HEK293 (cell line): ENCODE measurements at regions of chr14 and their contacts with region 1.

Region 1: GRCh38 chr14:94036313-94037050 is 10.3 kb downstream of the OTUB2 start:
- H3K4me3 ChIP-seq: no peak overlapping the region
- H3K27ac ChIP-seq: no peak overlapping the region
- H3K4me1 ChIP-seq: no peaks in the 10 kb centered on the region
- CTCF ChIP-seq: peak; percentile 69

Region 2: DNA sequence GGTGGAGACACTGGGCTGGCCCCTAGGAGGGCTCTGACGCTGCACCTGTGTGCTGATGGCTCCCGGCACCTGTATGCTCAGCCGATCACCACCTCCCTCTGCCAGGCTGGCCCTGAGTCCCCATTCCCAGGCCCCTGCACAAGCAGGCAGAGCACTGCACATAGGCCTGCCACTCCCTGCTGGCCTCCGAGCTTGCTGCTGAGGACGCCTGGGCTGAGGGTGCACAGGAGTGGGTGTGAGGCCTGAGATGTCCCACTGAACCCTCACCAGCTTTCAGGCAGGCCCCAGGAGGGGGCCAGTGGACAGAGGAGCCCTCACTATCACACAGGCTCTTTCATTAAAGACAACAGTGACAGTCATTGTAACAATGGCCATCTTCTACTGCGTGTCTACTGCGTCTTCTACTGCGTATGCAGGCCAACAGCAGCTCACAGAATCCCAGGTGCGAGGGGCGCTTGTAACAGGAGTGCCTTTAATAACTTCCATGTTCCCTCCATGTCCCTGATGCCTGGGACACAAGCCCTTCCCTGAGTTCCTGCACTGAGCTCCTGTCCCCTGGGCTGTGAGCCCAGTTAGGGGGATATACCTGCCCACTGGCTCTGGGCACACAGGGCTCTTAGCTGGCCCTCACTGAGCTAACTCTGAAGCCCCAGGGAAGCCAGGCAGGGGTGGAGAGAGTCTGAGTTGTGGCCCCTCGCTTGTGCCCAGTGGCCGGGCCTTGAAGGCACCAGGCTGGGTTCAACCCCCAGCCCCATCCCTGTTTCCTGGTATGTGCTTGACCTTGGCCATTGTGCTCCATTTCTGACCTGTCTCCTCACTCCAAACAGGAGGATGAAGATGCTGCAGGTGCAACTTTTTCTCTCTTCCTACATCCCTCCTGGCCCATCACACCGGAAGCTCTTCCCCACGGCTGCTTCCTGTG is 319.5 kb before region 1 on chr14:
- CTCF ChIA-PET with region 1: no interaction called
- POLR2A ChIA-PET with region 1: no interaction called
- H3K4me3 ChIP-seq: no peak overlapping the region
- H3K27ac ChIP-seq: no peak overlapping the region
- H3K4me1 ChIP-seq: no peaks in the 10 kb centered on the region
- CTCF ChIP-seq: no peak

Region 3: DNA sequence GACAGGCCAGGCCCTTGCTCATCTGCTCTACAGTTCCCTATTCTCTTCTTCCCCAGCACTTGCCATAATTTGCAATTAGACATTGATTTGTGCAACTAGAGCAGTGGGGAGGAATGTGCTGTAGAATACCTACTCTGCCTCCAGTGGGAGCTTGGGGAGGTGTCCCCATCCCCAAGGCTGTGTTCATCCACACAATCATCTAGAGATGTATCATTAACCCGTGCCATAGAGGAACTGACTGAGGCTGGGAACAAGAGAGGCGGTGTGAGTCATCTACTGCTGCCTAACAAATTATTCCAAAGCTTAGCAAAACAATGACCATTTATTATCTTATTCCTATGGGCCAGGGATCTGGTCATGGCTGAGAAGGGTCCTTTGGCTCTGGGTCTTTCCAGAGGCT is 15.5 kb before region 1 on chr14:
- CTCF ChIA-PET with region 1: interaction called, 25 read pairs
- POLR2A ChIA-PET with region 1: no interaction called
- H3K4me3 ChIP-seq: no peak overlapping the region
- H3K27ac ChIP-seq: no peak overlapping the region
- H3K4me1 ChIP-seq: no peaks in the 10 kb centered on the region
- CTCF ChIP-seq: no peak

Region 4: DNA sequence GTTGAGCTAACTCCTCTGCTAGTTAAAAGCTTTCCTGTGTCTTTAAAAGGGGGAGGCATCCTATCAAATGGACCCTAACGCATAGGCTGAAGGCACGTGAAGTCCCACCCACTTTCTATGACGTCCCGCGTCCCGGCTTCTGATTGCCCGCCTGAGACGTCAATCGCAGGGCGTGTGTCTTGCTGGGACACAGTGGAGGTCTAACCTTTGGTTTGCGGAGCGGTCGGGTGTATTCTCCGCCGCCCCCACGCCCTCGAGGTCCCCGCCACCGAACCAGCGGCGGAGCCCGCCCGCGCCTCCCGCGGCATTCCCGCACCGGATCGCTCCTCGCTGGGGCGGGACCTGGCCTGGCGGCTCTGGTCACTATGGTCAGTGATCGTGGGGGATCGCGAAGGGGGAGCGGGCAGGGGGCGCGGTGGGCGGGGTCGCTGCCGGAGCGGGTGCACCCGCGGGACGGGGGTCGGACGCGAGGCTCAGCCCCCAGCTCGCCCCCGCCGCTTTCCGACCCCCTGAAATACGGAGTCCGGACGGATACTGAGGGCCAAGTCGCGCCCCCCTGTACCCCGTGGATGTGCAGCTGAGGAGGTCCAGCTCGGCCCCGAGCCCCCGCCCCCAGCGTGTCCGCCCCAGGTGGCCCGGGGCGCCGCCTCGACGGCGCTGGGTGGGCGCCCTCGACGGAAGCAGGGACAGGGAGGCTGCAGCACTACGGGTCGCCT is 10.2 kb before region 1 on chr14 and contains the start of gene OTUB2:
- CTCF ChIA-PET with region 1: interaction called, 25 read pairs
- POLR2A ChIA-PET with region 1: no interaction called
- H3K4me3 ChIP-seq: peak within 1 kb of the TSS; percentile 63
- H3K27ac ChIP-seq: no peak within 1 kb of the TSS
- H3K4me1 ChIP-seq: no peaks in the 10 kb centered on the region
- CTCF ChIP-seq: no peak

Region 5: DNA sequence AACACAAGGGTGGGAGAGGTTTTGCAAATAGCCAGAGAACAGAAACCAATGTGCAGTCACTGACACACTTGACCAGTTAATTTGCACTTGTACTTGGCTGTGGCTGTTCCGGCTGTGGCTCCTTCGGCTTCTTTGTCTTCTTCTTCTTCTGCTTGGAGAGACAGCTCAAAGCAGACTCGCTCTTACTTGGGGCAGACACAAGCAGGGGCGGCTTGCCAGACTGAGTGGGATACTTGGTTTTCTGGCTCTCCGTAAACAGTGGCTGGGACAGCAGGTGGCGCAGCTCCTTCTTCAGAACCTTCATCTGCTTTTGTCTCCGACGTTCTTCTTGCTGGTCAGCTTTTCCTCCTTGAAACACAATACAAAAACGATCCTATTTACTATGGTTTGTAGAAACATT is 14.6 kb after region 1 on chr14:
- CTCF ChIA-PET with region 1: interaction called, 19 read pairs
- POLR2A ChIA-PET with region 1: no interaction called
- H3K4me3 ChIP-seq: no peak overlapping the region
- H3K27ac ChIP-seq: no peak overlapping the region
- H3K4me1 ChIP-seq: peaks cover 4% of the 10 kb centered on the region; the same call in 1 of the 2 replicates
- CTCF ChIP-seq: peak; percentile 41; the same call in 1 of the 2 replicates

Region 6: GRCh38 chr14:94056579-94057308 is 20.3 kb after region 1 on chr14:
- CTCF ChIA-PET with region 1: interaction called, 18 read pairs
- POLR2A ChIA-PET with region 1: no interaction called
- H3K4me3 ChIP-seq: no peak overlapping the region
- H3K27ac ChIP-seq: no peak overlapping the region
- H3K4me1 ChIP-seq: no peaks in the 10 kb centered on the region
- CTCF ChIP-seq: no peak

Region 7: GRCh38 chr14:94129111-94129757 is 92.8 kb after region 1 on chr14 and contains the start of gene IFI27L2:
- CTCF ChIA-PET with region 1: interaction called, 13 read pairs
- POLR2A ChIA-PET with region 1: interaction called, 5 read pairs
- H3K4me3 ChIP-seq: peak within 1 kb of the TSS; percentile 48
- H3K27ac ChIP-seq: peak within 1 kb of the TSS; percentile 37; the same call in 1 of the 2 replicates
- H3K4me1 ChIP-seq: peaks cover 3% of the 10 kb centered on the region; the same call in 1 of the 2 replicates
- CTCF ChIP-seq: 0 out of 2 replicates have a peak, but pooled peaks have one; percentile 31